ENCODE measurements at regions of chr4 and their contacts with region 1.

Region 1: DNA sequence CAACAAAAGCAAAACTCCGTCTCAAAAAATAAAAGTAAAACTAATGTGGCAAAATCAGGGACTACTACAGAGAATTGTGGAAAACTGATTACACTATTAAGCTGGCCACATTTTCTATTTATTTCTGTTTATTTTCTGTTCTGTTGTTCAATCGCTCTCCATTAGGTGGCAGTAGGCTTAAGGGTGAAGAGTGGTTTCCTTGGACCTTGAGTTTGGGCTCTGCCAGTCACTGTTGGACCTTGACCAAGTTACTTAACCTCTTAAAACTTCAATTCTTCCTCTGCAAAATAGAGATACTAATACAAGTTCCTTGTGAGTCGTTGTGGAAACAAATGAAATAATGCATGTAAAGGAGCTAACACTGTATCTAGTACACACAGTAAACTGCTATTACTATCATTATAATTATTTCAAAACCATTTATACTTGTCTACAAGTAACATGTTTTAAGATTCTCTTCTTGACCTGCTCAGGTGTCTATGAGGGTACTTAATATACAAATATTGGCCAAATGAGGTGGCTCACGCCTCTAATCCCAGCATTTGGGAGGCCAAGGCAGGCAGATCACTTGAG is 15.2 kb downstream of the HSD17B11 start:
- DNase-seq: peak in 1 of 35 experiments; percentile 62
- ATAC-seq: peak in 1 of 4 experiments; percentile 31
- H3K4me3 ChIP-seq: no peak overlapping the region
- H3K4me3 Mint-ChIP-seq: no peak overlapping the region
- H3K27ac ChIP-seq: no peak overlapping the region
- H3K27ac Mint-ChIP-seq: no peak overlapping the region
- H3K4me1 ChIP-seq: no peaks in the 10 kb centered on the region
- H3K4me1 Mint-ChIP-seq: peaks cover 0 to 2% (median 0%) of the 10 kb centered on the region in 3 donors
- H3K27me3 ChIP-seq: no peaks in the 10 kb centered on the region
- H3K27me3 Mint-ChIP-seq: no peaks in the 10 kb centered on the region

Region 2: DNA sequence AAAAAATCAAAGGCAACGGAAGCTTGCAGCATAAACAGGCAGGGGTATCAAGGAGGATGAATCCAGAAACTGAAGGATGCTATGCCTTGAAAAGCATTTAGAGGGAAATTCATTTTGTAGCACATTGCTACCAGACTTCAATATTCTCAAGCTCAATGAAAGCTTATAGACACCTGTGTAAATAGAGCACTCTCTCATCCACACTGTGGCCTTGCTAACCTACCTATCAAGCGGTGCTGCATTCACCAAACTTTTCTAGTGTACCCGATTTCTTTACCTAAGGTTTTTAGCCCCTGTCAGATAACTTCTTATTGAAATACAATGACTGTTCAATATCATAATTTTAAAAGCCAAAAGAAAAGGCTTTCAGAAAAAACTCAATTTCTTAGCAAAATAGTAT is 32.9 kb before region 1 on chr4:
- CTCF ChIA-PET with region 1: interaction called, 3 read pairs
- POLR2A ChIA-PET with region 1: interaction called in 1 of 2 experiments, 10 read pairs
- DNase-seq: no peak
- ATAC-seq: no peak
- H3K4me3 ChIP-seq: no peak overlapping the region
- H3K4me3 Mint-ChIP-seq: no peak overlapping the region
- H3K27ac ChIP-seq: no peak overlapping the region
- H3K27ac Mint-ChIP-seq: no peak overlapping the region
- H3K4me1 ChIP-seq: no peaks in the 10 kb centered on the region
- H3K4me1 Mint-ChIP-seq: peaks cover 0 to 1% (median 0%) of the 10 kb centered on the region in 3 donors
- H3K27me3 ChIP-seq: no peaks in the 10 kb centered on the region
- H3K27me3 Mint-ChIP-seq: no peaks in the 10 kb centered on the region

Region 3: DNA sequence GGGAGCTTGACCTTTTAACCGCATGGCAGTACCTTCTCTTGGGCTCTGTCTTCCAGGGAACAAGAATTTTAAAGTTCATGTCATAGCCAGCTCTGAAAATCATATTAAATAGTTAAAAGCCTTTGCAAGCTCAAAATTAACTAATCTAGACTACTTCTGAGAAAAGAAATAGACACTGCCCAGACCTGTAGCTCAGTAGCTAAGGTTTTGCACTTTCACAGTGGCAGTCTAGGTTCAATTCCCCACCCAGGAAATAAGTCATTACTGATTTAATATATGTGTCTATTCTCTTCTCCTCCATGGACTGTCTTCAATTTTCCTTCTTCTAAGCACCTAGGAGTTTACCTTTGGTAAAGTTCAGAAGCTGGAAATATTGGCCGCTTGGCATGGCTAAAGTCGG is 12.2 kb before region 1 on chr4:
- CTCF ChIA-PET with region 1: interaction called in 1 of 2 experiments, 3 read pairs
- POLR2A ChIA-PET with region 1: interaction called in 1 of 2 experiments, 11 read pairs
- DNase-seq: no peak
- ATAC-seq: no peak
- H3K4me3 ChIP-seq: no peak overlapping the region
- H3K4me3 Mint-ChIP-seq: no peak overlapping the region
- H3K27ac ChIP-seq: no peak overlapping the region
- H3K27ac Mint-ChIP-seq: no peak overlapping the region
- H3K4me1 ChIP-seq: no peaks in the 10 kb centered on the region
- H3K4me1 Mint-ChIP-seq: no peaks in the 10 kb centered on the region
- H3K27me3 ChIP-seq: no peaks in the 10 kb centered on the region
- H3K27me3 Mint-ChIP-seq: no peaks in the 10 kb centered on the region

Region 4: GRCh38 chr4:87390891-87391575 is 15.2 kb after region 1 on chr4 and contains the start of gene HSD17B11:
- CTCF ChIA-PET with region 1: interaction called, 3 to 20 read pairs
- POLR2A ChIA-PET with region 1: interaction called in 1 of 2 experiments, 6 read pairs
- DNase-seq: peak; percentile 64 to 90 (median 78)
- ATAC-seq: peak; percentile 98 to 99 (median 98)
- H3K4me3 ChIP-seq: peak within 1 kb of the TSS; percentile 86 to 99
- H3K4me3 Mint-ChIP-seq: peak within 1 kb of the TSS; percentile 93 to 95 (median 94)
- H3K27ac ChIP-seq: peak within 1 kb of the TSS; percentile 82
- H3K27ac Mint-ChIP-seq: peak within 1 kb of the TSS; percentile 92 to 97
- H3K4me1 ChIP-seq: peaks cover 10 to 33% of the 10 kb centered on the region in 2 experiments
- H3K4me1 Mint-ChIP-seq: peaks cover 49 to 62% (median 51%) of the 10 kb centered on the region in 3 donors
- H3K27me3 ChIP-seq: no peaks in the 10 kb centered on the region
- H3K27me3 Mint-ChIP-seq: no peaks in the 10 kb centered on the region
- total RNA-seq, gene HSD17B11: 38.0 to 57.7 (median 51.2) TPM

Region 5: GRCh38 chr4:87465739-87466366 is 90.0 kb after region 1 on chr4:
- CTCF ChIA-PET with region 1: interaction called, 18 to 93 read pairs
- POLR2A ChIA-PET with region 1: no interaction called
- DNase-seq: peak in 6 of 35 experiments; percentile 1 to 69 (median 8)
- ATAC-seq: peak in 1 of 4 experiments; percentile 39
- H3K4me3 ChIP-seq: no peak overlapping the region
- H3K4me3 Mint-ChIP-seq: no peak overlapping the region
- H3K27ac ChIP-seq: no peak overlapping the region
- H3K27ac Mint-ChIP-seq: no peak overlapping the region
- H3K4me1 ChIP-seq: no peaks in the 10 kb centered on the region
- H3K4me1 Mint-ChIP-seq: peaks cover 0 to 3% (median 0%) of the 10 kb centered on the region in 3 donors
- H3K27me3 ChIP-seq: no peaks in the 10 kb centered on the region
- H3K27me3 Mint-ChIP-seq: no peaks in the 10 kb centered on the region

Region 6: GRCh38 chr4:87476934-87477333 is 101.1 kb after region 1 on chr4:
- CTCF ChIA-PET with region 1: interaction called, 3 to 4 read pairs
- POLR2A ChIA-PET with region 1: interaction called in 1 of 2 experiments, 11 read pairs
- DNase-seq: no peak
- ATAC-seq: no peak
- H3K4me3 ChIP-seq: no peak overlapping the region
- H3K4me3 Mint-ChIP-seq: no peak overlapping the region
- H3K27ac ChIP-seq: no peak overlapping the region
- H3K27ac Mint-ChIP-seq: no peak overlapping the region
- H3K4me1 ChIP-seq: no peaks in the 10 kb centered on the region
- H3K4me1 Mint-ChIP-seq: no peaks in the 10 kb centered on the region
- H3K27me3 ChIP-seq: no peaks in the 10 kb centered on the region
- H3K27me3 Mint-ChIP-seq: no peaks in the 10 kb centered on the region